ENCODE measurements at regions of chr20 and their contacts with region 1.

Region 1: GRCh38 chr20:45322952-45323383 is 14.9 kb upstream of the MATN4 start:
- DNase-seq: peak; percentile 76 to 81
- H3K4me3 ChIP-seq: no peak overlapping the region
- H3K27ac ChIP-seq: peak overlapping the region in 1 of 2 donors; percentile 49
- H3K4me1 ChIP-seq: no peaks in the 10 kb centered on the region
- H3K27me3 ChIP-seq: no peaks in the 10 kb centered on the region
- CTCF ChIP-seq: peak in 1 of 2 experiments; percentile 30

Region 2: GRCh38 chr20:44765652-44766347 is 557.2 kb before region 1 on chr20:
- intact Hi-C with region 1: no loop called
- DNase-seq: no peak
- H3K4me3 ChIP-seq: no peak overlapping the region
- H3K27ac ChIP-seq: no peak overlapping the region
- H3K4me1 ChIP-seq: no peaks in the 10 kb centered on the region
- H3K27me3 ChIP-seq: peaks cover 0 to 20% of the 10 kb centered on the region in 2 donors
- CTCF ChIP-seq: no peak

Region 3: DNA sequence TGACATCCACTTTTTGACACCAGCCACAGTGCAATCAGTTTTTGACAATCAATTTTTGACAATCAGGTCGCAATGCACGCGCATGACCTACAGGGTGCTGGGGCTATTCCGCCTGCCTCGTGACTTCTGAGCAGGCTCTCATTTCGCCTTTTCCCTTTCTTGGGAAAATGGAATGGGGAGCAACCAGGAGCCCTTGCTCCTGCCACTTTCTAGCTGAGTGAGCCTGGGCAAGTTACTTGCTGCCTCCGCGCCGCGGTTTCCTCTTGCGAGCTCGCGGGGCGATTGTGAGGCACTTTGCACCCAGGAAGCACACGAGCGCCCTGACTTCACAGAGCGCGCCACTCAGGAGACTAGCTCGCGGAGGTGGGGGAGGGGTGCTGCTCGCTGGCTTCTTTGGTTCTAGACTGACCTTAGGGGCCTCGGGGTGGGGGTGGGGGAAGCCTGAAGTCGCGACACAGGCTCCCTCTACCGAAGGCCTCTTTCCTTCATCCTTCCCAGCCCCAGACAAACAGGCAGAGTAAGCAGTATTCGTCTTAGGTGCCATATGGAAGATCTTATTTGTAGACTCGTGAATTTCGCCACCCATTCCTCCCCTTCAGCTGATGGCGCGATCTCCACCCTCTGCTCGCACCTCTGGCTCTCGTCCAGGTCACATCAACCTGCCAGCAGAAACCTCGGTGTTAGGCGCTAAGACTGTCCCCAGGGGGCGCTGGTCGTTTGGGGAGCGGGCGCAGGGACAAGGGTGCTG is 50.6 kb after region 1 on chr20:
- intact Hi-C with region 1: loop called (anchors 5 kb)
- DNase-seq: peak; percentile 89 to 96
- H3K4me3 ChIP-seq: peak overlapping the region; percentile 51 to 61
- H3K27ac ChIP-seq: peak overlapping the region; percentile 87 to 94
- H3K4me1 ChIP-seq: peaks cover 0 to 36% (median 14%) of the 10 kb centered on the region in 4 donors
- H3K27me3 ChIP-seq: no peaks in the 10 kb centered on the region
- CTCF ChIP-seq: peak; percentile 84 to 94

Region 4: DNA sequence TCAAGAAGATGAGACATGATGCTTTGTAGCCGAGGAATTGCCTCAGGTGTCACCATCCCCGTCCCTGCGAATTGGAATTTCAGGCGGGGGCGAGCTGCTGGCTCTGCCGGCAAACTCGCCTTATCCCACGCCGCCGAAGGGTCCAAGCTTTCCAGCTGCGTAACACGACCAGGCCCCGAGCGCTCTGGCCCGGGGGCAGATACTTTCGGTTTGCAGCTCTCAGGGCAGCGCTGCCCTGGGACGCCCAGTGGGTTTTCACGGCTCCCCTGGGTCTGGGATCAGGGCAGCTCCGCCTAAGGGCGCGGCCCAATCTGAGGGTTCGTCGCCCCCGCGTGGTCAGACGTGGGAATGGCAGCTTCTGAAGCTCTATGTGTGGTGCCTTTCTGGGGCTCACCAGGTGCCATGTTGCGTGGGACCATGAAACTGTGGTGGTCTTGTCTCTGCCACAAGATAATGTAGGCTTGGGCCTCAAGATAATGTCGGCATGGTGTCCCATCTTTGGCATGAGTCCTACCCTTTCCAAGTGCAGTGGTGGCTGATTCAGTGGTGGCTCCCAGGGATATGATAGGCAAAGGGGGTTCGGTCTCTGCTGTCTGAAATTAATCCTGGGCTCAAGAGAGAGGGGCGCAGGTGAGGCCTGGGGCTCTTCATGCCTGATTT is 113.9 kb after region 1 on chr20:
- intact Hi-C with region 1: loop called (anchors 5 kb)
- DNase-seq: peak; percentile 89 to 94
- H3K4me3 ChIP-seq: peak overlapping the region; percentile 55 to 61
- H3K27ac ChIP-seq: peak overlapping the region; percentile 82 to 86
- H3K4me1 ChIP-seq: peaks cover 0 to 13% (median 0%) of the 10 kb centered on the region in 4 donors
- H3K27me3 ChIP-seq: no peaks in the 10 kb centered on the region
- CTCF ChIP-seq: peak; percentile 90 to 96

Region 5: DNA sequence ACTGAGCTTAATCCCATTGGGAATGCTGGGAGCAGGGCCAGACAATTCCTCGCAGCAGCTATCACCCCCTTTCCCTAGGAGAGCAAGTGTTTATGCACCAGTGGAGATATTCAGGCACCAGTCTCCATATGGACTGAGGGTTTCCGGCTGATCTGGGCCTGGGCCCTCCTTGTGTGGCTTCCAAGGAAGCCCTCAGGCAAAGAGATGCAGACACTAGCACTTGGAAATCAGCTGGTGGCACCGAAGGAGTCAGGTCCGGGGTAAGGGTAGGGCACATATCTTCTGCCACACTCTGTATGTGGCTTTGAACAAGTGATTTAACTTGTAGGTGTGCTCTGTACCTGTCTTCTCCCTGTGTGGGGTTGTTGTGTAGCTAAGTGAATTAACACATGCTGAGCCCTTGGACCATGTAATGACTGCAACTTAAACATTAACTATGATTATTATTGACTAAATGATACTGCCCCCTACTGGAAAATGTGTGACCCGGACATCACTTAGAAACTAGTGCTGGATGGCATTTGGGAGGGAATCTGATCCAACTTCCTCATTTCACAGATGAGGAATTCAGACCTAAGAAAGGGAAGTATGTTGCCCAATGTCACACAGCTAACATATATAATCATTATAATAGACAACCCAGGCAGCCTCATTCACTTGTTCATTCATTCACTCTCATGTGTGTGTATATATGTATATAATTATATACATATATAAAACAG is 127.3 kb after region 1 on chr20:
- intact Hi-C with region 1: loop called (anchors 5 kb)
- DNase-seq: no peak
- H3K4me3 ChIP-seq: no peak overlapping the region
- H3K27ac ChIP-seq: peak overlapping the region; percentile 60 to 68
- H3K4me1 ChIP-seq: peaks cover 0 to 26% (median 10%) of the 10 kb centered on the region in 4 donors
- H3K27me3 ChIP-seq: no peaks in the 10 kb centered on the region
- CTCF ChIP-seq: peak; percentile 37 to 46

Region 6: GRCh38 chr20:45771182-45771759 is 448.3 kb after region 1 on chr20:
- intact Hi-C with region 1: loop called (anchors 5 kb)
- DNase-seq: peak; percentile 82 to 86
- H3K4me3 ChIP-seq: no peak overlapping the region
- H3K27ac ChIP-seq: peak overlapping the region; percentile 69 to 79
- H3K4me1 ChIP-seq: peaks cover 0 to 12% (median 8%) of the 10 kb centered on the region in 4 donors
- H3K27me3 ChIP-seq: no peaks in the 10 kb centered on the region
- CTCF ChIP-seq: peak; percentile 93 to 94